A549 (cell line): ENCODE measurements at regions of chr18 and their contacts with region 1.

Region 1: DNA sequence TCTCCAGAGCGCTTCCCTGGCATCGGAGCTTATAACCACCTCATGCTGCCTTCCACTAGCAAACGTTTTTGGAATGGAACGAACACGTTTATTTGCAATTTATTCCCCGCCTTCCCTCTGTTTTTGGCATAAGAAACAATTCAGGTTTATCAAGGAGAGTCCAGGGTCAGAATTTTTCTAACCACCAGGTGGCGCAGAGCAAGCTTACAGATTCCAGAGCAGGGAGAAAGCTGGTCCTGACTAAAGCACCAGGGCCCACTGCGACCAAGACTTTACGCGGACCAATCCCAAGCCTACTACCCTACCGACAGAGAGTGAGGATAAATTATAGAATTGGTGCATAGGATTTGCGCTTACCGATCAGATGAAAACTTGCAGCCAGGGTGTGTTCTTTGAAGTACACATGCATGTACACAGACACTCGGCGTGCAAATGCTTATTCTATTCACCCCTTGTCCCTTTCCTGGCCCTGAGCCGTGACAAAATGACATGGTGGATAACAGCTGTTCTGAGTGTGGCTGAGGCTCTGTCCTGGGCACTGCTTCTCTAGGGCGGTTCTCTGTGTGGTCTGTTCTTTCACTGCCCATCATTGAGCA is 34.7 kb downstream of the NAPG start:
- DNase-seq: peak; percentile 35 to 53
- ATAC-seq: peak; percentile 72 to 91; a peak in 5 of 6 replicates
- H3K4me3 ChIP-seq: no peak overlapping the region
- H3K27ac ChIP-seq: no peak overlapping the region
- H3K4me1 ChIP-seq: no peaks in the 10 kb centered on the region
- CTCF ChIP-seq: peak; percentile 71
- EP300 ChIP-seq: no peak
- POLR2A ChIP-seq: no peak
- RAD21 ChIP-seq: peak; percentile 58 to 59

Region 2: GRCh38 chr18:10546557-10547300 is 13.8 kb before region 1 on chr18:
- CTCF ChIA-PET with region 1: interaction called, 11 read pairs
- POLR2A ChIA-PET with region 1: no interaction called
- DNase-seq: no peak
- ATAC-seq: no peak
- H3K4me3 ChIP-seq: no peak overlapping the region
- H3K27ac ChIP-seq: no peak overlapping the region
- H3K4me1 ChIP-seq: no peaks in the 10 kb centered on the region
- CTCF ChIP-seq: no peak
- EP300 ChIP-seq: no peak
- POLR2A ChIP-seq: no peak
- RAD21 ChIP-seq: no peak

Region 3: DNA sequence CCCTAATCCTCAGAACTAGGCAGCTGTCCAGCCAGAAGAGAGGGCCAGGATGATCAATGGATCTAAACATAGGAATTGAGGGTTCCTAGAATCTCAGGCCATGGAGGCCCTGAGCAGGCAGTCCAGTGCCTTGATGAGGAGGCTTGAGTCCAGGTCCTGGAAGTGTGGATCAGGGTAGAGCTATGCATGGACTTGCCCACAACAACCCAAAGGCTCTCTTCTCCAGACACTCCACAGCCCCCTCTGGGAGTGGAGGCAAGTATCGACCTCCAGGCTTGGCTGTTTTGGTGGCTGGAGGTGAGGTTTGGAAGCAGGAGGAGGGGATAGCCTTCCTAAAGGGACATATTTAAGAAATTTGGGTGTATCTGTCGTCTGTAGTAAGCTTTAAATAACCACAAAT is 11.0 kb after region 1 on chr18:
- CTCF ChIA-PET with region 1: interaction called, 11 read pairs
- POLR2A ChIA-PET with region 1: no interaction called
- DNase-seq: no peak
- ATAC-seq: no peak
- H3K4me3 ChIP-seq: no peak overlapping the region
- H3K27ac ChIP-seq: no peak overlapping the region
- H3K4me1 ChIP-seq: no peaks in the 10 kb centered on the region
- CTCF ChIP-seq: no peak
- EP300 ChIP-seq: no peak
- POLR2A ChIP-seq: no peak
- RAD21 ChIP-seq: no peak

Region 4: DNA sequence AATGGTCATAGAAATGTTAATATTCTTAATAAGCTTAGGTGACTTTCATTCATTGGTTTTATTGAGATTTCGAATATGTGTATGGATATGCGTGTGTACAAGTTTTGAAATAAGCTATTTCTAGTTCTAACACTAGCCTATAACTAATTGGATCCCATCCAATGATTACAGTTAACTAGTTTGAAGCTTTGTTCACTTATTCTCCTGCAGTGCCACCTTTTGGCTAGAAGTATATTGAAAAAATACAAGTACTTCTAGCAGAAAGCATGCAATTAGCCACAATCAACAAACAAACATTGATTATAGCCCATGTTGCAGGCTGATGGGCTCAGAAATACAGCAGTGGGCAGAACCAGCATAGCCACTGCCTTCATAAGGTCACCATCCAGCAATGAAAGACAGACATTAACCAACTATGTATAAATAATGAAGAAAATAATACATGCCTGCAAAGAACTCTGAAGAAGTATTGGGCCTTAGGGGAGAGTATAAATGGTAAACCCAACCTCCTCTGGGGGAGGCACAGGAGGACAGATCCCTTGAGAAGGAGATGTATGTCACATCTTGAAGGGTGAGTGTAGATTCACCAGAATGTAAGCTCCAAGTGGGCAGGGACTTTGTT is 593.9 kb after region 1 on chr18:
- CTCF ChIA-PET with region 1: interaction called, 23 read pairs
- POLR2A ChIA-PET with region 1: no interaction called
- DNase-seq: peak; percentile 13 to 42
- ATAC-seq: no peak
- H3K4me3 ChIP-seq: no peak overlapping the region
- H3K27ac ChIP-seq: no peak overlapping the region
- H3K4me1 ChIP-seq: 0 out of 3 replicates have a peak, but pooled peaks cover 2% of the 10 kb centered on the region
- CTCF ChIP-seq: peak; percentile 61
- EP300 ChIP-seq: no peak
- POLR2A ChIP-seq: no peak
- RAD21 ChIP-seq: peak; percentile 67 to 79

Region 5: GRCh38 chr18:11553098-11553940 is 992.8 kb after region 1 on chr18:
- CTCF ChIA-PET with region 1: interaction called, 11 read pairs
- POLR2A ChIA-PET with region 1: no interaction called
- DNase-seq: peak; percentile 35 to 52
- ATAC-seq: peak; percentile 71 to 81; a peak in 5 of 6 replicates
- H3K4me3 ChIP-seq: no peak overlapping the region
- H3K27ac ChIP-seq: no peak overlapping the region
- H3K4me1 ChIP-seq: no peaks in the 10 kb centered on the region
- CTCF ChIP-seq: peak; percentile 62
- EP300 ChIP-seq: no peak
- POLR2A ChIP-seq: no peak
- RAD21 ChIP-seq: peak; percentile 73 to 77